Activated CD4-positive, alpha-beta T cell treated with anti-CD3 and anti-CD28 coated beads for 36 hours (primary cell): ENCODE measurements at regions of chr11 and their contacts with region 1.

Region 1: DNA sequence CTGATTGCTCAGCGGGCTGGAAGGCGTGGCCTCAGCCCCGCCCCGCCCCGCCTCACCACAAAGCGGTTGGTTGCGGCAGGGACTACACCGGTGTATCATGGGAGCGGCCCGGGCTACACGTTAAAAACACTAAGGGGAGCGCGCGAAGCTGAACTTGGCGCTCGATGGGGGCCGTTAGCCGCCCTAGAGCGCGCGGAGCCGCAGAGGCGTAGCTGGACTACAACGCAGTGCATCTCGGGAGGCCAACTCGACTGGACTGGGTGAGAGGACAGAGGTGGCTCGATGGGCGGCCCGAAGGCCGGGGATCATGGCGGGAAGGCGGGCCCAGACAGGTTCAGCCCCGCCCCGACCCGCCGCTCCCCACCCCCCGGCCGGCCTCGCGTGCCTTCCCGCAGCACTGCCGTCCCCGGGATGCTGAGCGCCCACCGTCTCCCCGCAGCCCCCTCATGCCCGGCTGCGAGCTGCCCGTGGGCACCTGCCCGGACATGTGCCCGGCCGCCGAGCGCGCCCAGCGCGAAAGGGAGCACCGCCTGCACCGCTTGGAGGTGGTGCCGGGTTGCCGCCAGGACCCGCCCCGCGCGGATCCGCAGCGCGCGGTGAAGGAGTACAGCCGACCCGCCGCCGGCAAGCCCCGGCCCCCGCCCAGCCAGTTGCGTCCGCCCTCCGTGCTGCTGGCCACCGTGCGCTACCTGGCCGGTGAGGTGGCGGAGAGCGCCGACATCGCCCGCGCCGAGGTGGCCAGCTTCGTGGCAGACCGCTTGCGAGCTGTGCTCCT is at the start of gene SAC3D1:
- DNase-seq: peak; percentile 96
- ATAC-seq: peak; percentile 95
- H3K4me3 Mint-ChIP-seq: peak within 1 kb of the TSS; percentile 86
- H3K27ac Mint-ChIP-seq: peak within 1 kb of the TSS; percentile 95
- H3K4me1 Mint-ChIP-seq: peaks cover 17% of the 10 kb centered on the region
- H3K27me3 Mint-ChIP-seq: no peaks in the 10 kb centered on the region
- total RNA-seq, gene SAC3D1: 10.5 to 12.1 TPM

Region 2: DNA sequence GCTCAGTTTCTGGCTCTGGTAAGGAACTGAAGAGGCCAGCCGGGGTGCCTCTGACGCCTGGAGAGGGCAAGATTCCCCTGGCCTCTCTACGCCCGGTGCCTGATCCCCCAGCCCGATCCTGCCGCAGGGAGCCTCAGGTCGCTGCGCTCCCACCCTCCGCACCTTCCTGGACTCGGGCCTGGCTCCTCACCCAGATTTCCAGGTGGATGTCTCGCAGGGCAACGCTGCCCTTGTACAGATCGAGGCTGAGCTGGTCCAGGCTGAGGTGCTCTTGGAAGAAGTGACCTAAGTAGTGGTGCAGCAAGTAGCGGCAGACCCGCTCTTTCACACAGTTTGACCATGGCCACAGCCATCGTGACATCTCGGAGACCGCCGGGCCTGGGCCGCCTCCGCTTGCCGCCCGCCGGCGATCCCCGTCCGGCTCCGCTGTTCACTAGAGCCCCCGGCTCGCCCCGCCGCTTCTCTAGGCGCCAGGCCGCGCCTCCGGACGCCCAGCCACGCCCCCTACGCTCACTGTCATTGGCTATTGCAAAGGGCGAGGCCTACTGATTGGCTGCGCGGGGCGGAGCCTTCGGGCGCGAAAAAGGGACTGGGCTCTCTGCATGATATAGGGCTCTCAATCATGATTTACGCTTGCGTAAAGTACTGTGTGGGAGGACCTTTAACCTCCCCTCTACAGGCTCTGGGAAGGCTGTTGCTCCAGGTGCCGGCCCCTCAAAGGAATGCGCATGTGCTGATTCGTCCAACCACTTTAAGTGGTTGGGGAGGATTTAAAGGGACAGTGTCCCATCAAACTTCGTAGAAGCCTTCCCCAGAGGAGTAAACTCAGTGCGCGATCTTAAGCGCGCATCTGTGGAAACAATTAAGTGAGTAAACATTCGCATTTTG is 124.0 kb before region 1 on chr11 and contains the start of gene ATG2A:
- CTCF ChIA-PET with region 1: no interaction called
- POLR2A ChIA-PET with region 1: no interaction called
- intact Hi-C with region 1: loop called in 1 of 2 experiments (anchors 1 kb)
- DNase-seq: peak; percentile 99
- ATAC-seq: peak; percentile 99
- H3K4me3 Mint-ChIP-seq: peak within 1 kb of the TSS; percentile 90
- H3K27ac Mint-ChIP-seq: peak within 1 kb of the TSS; percentile 88
- H3K4me1 Mint-ChIP-seq: peaks cover 16% of the 10 kb centered on the region
- H3K27me3 Mint-ChIP-seq: no peaks in the 10 kb centered on the region
- total RNA-seq, gene ATG2A: 15.8 to 16.7 TPM

Region 3: DNA sequence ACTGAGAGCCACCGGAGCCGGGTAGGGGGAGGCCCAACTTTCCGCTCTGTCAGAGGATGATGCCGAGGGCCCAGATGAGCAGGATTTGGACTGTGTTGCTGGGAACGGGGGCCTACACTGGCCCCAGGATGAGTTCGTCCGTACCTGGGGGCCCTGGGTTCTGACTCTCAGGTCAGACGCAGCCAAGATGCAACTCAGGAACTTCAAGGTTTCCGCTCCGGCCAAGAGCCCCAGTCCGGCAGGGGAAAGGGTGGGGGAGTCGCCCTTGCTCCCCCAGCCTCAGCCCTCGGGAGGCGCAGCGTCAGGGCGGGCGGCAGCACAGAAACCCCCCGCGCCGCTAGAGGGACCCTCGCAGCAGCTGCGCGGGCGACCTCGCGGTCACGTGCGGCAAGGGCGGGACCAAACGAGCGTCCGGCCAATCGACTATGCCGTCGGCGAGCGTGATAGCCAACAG is 27.3 kb before region 1 on chr11:
- CTCF ChIA-PET with region 1: interaction called, 4 read pairs
- POLR2A ChIA-PET with region 1: interaction called, 3 read pairs
- intact Hi-C with region 1: loop called (anchors 1 to 2 kb)
- DNase-seq: peak; percentile 90
- ATAC-seq: peak; percentile 87
- H3K4me3 Mint-ChIP-seq: peak overlapping the region; percentile 83
- H3K27ac Mint-ChIP-seq: peak overlapping the region; percentile 96
- H3K4me1 Mint-ChIP-seq: peaks cover 25% of the 10 kb centered on the region
- H3K27me3 Mint-ChIP-seq: no peaks in the 10 kb centered on the region

Region 4: DNA sequence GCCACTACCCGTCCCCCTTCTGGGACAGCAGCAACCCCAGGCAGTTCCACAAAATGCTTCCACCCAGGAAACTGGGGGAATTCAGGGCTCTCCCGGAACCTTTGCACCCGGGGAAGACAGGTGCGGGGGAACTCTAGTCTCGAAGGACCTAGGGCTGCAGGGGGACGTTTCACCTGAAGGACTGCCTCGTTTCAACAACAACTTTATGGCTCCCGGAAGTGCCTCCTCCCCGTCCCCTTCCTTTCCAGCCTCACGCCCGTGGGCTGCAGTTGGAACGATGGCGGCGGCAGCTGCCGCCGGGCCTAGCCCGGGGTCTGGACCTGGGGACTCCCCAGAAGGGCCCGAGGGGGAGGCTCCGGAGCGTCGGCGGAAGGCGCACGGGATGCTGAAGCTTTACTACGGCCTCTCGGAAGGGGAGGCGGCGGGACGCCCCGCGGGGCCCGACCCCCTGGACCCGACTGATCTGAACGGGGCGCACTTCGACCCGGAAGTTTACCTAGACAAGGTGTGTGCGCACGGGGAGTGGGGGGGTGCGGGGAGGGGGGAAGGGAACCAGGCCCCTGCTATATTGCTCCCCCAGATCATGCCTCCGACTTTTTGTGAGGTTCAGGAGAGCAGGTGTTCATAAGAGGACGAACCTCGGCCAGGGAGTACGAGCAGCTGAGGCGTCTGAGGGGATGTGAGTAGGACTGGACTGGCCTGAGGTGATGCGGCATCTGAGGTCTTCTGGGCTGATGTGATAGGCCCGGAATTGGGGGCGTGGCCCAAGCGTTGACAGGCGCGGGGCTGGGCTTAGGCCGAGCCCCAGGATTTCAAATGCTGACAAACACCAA is 55.2 kb after region 1 on chr11 and contains the start of gene VPS51:
- CTCF ChIA-PET with region 1: interaction called, 3 read pairs
- POLR2A ChIA-PET with region 1: no interaction called
- intact Hi-C with region 1: loop called in 1 of 2 experiments (anchors 1 kb)
- DNase-seq: peak; percentile 93
- ATAC-seq: peak; percentile 98
- H3K4me3 Mint-ChIP-seq: peak within 1 kb of the TSS; percentile 92
- H3K27ac Mint-ChIP-seq: peak within 1 kb of the TSS; percentile 94
- H3K4me1 Mint-ChIP-seq: peaks cover 12% of the 10 kb centered on the region
- H3K27me3 Mint-ChIP-seq: no peaks in the 10 kb centered on the region
- total RNA-seq, gene VPS51: 94.3 to 123 TPM

Region 5: DNA sequence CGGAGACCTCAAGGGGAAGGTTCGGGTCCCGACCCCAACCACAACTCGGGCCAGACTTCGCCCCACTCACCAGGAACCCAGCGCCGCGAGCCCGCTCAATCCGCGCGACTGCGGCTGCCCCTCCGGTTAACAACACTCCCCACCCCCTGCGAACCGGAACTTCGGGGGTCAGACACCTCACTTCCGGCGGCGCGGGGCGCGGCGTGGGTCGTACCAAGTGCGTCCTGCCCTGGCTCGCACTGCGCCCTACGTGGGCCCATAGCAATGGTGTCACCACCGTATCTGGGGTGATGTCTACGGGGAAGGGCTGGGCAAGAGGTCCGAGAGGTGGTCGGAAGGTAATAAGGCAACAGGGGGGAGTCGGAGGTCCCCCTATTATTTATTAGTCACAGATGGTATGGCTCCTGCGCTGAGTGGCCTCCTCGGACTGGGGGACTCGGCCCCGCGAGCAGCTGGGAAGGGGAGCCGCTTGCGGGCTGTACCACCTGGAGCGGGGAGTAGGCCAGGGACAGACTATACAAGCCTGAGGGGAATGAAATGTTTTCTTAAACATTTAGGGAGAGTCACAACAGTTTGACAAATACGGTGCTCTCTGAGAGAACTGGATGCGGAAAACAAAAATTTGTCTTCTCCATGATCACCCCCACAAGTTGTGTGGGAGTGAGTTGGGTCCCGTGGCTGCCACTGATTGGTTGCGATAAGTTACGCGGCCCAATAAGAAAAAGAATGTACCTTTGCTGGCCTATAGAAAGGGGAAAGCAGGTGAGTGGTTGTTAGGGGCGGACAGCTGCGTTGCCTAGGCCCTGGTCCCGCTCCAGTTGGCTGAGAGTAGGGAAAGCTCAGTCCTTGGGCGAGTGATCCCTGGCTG is 93.6 kb after region 1 on chr11 and contains the start of gene SYVN1:
- CTCF ChIA-PET with region 1: interaction called, 3 read pairs
- POLR2A ChIA-PET with region 1: no interaction called
- intact Hi-C with region 1: loop called (anchors 1 kb)
- DNase-seq: peak; percentile 95
- ATAC-seq: peak; percentile 91
- H3K4me3 Mint-ChIP-seq: peak within 1 kb of the TSS; percentile 97
- H3K27ac Mint-ChIP-seq: peak within 1 kb of the TSS; percentile 97
- H3K4me1 Mint-ChIP-seq: peaks cover 27% of the 10 kb centered on the region
- H3K27me3 Mint-ChIP-seq: no peaks in the 10 kb centered on the region
- total RNA-seq, gene SYVN1: 24.3 to 31.1 TPM